Colonic mucosa (tissue), 4 donors: ENCODE measurements at regions of chr2 and their contacts with region 1.

Region 1: GRCh38 chr2:181742922-181743722 is 62.8 kb upstream of the NEUROD1 start:
- DNase-seq: peak; percentile 68
- H3K4me3 ChIP-seq: no peak overlapping the region
- H3K27ac ChIP-seq: no peak overlapping the region
- H3K4me1 ChIP-seq: no peaks in the 10 kb centered on the region
- H3K27me3 ChIP-seq: no peaks in the 10 kb centered on the region
- CTCF ChIP-seq: peak; percentile 65

Region 2: DNA sequence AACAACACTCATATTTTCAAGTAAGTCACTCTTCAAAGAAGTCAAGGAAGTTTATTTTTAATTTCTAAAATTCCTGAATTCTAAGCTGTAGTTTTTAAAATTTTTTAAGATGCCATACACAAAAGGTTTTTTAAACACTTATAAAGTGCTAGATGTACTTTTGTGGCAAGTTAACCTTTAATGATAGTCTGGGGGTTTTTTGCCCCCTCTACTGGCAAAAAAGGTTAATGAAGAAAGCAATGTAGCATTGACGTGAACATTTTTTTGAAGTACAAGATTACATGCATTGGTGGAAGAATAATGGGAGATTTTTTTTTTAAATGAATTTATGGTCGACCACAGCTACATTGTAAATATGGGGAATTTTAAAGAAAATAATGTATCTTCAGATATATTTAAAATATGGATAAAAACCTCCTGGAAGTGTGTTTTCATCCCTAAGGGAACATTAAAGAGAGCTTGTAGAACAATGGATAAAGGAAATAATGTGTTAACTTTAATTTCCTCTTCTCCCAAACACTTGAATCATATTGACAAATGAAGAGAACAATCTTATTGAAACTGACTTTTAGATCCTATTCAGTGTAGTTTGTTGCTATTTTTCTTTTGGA is 161.0 kb after region 1 on chr2:
- intact Hi-C with region 1: loop called (anchors 5 kb)
- DNase-seq: no peak
- H3K4me3 ChIP-seq: no peak overlapping the region
- H3K27ac ChIP-seq: no peak overlapping the region
- H3K4me1 ChIP-seq: no peaks in the 10 kb centered on the region
- H3K27me3 ChIP-seq: no peaks in the 10 kb centered on the region
- CTCF ChIP-seq: peak; percentile 38

Region 3: DNA sequence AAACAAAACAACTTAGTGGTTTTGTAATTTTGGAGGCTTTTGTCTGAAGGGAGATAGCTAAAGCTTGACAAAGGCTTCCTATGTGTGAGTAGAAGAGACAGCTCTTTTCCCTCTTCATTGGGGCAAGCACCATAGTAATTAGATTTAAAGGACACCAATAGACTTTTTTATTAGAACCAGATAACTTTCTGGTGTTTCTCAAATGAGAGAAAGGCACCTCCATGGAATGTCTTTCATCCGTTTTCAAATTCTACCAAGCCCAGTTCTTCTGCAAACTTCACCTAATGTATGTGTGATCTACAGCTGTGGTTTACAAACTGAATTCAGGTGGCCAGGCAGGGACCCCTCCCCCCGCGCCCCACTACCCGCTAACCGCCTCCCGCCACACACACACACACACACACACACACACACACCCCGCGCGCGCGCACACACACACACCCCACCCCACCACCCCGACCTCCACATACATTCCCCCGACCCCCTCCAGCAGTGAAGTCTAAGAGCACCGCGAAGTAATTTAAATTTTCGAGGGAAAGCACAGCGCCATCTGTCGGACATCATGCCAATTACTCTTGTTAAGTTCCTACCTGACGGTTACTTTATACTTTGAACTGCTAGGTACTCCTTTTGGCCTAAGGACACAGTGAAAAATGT is 210.9 kb after region 1 on chr2:
- intact Hi-C with region 1: loop called (anchors 2 kb)
- DNase-seq: peak; percentile 83
- H3K4me3 ChIP-seq: no peak overlapping the region
- H3K27ac ChIP-seq: no peak overlapping the region
- H3K4me1 ChIP-seq: no peaks in the 10 kb centered on the region
- H3K27me3 ChIP-seq: no peaks in the 10 kb centered on the region
- CTCF ChIP-seq: no peak

Region 4: GRCh38 chr2:182077451-182078142 is 334.5 kb after region 1 on chr2:
- intact Hi-C with region 1: loop called (anchors 2 kb)
- DNase-seq: peak; percentile 56
- H3K4me3 ChIP-seq: no peak overlapping the region
- H3K27ac ChIP-seq: peak overlapping the region; percentile 15
- H3K4me1 ChIP-seq: no peaks in the 10 kb centered on the region
- H3K27me3 ChIP-seq: no peaks in the 10 kb centered on the region
- CTCF ChIP-seq: peak; percentile 44

Region 5: GRCh38 chr2:182650704-182651103 is 907.6 kb after region 1 on chr2:
- intact Hi-C with region 1: loop called (anchors 10 kb)
- DNase-seq: no peak
- H3K4me3 ChIP-seq: no peak overlapping the region
- H3K27ac ChIP-seq: no peak overlapping the region
- H3K4me1 ChIP-seq: no peaks in the 10 kb centered on the region
- H3K27me3 ChIP-seq: no peaks in the 10 kb centered on the region
- CTCF ChIP-seq: peak; percentile 37